ENCODE measurements at regions of chrX and their contacts with region 1.

Region 1: GRCh38 chrX:48728653-48729052 is 32.1 kb downstream of the SUV39H1 start:
- DNase-seq: no peak
- H3K4me3 Mint-ChIP-seq: no peak overlapping the region
- H3K27ac Mint-ChIP-seq: no peak overlapping the region
- H3K4me1 Mint-ChIP-seq: peaks cover 20% of the 10 kb centered on the region
- H3K27me3 Mint-ChIP-seq: no peaks in the 10 kb centered on the region

Region 2: DNA sequence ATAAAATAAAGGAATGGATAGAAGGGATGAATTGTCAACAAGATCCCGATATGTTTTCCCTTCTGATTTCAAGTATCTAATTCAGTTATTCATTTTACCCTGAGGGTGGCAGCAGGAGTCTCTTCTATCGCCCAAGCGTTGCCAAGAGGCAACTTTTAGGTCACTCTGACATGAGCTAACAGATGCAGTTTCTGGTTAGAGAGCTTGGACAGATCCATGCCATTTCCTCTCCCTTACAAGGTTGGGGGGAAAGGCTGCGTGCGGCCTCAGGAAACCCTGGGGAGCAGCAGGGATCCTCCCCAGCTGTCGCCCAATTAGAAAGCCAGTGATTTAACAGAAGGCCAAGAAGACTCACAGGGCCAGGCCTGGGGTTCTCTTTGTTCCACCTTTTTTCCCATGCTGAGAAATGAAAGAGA is 80.3 kb before region 1 on chrX:
- CTCF ChIA-PET with region 1: no interaction called
- POLR2A ChIA-PET with region 1: no interaction called
- DNase-seq: peak; percentile 32
- H3K4me3 Mint-ChIP-seq: no peak overlapping the region
- H3K27ac Mint-ChIP-seq: no peak overlapping the region
- H3K4me1 Mint-ChIP-seq: peaks cover 3% of the 10 kb centered on the region
- H3K27me3 Mint-ChIP-seq: no peaks in the 10 kb centered on the region

Region 3: GRCh38 chrX:48715072-48715471 is 13.6 kb before region 1 on chrX:
- CTCF ChIA-PET with region 1: no interaction called
- POLR2A ChIA-PET with region 1: interaction called, 12 read pairs
- DNase-seq: no peak
- H3K4me3 Mint-ChIP-seq: peak overlapping the region; percentile 74
- H3K27ac Mint-ChIP-seq: peak overlapping the region; percentile 98
- H3K4me1 Mint-ChIP-seq: peaks cover 74% of the 10 kb centered on the region
- H3K27me3 Mint-ChIP-seq: no peaks in the 10 kb centered on the region

Region 4: GRCh38 chrX:48761674-48762471 is 33.2 kb after region 1 on chrX and contains the start of gene GLOD5:
- CTCF ChIA-PET with region 1: no interaction called
- POLR2A ChIA-PET with region 1: no interaction called
- DNase-seq: peak; percentile 50
- H3K4me3 Mint-ChIP-seq: no peak within 1 kb of the TSS
- H3K27ac Mint-ChIP-seq: peak within 1 kb of the TSS; percentile 35
- H3K4me1 Mint-ChIP-seq: peaks cover 6% of the 10 kb centered on the region
- H3K27me3 Mint-ChIP-seq: no peaks in the 10 kb centered on the region
- total RNA-seq, gene GLOD5: not detected